CD4-positive, alpha-beta T cell (primary cell): ENCODE measurements at regions of chr17 and their contacts with region 1.

Region 1: DNA sequence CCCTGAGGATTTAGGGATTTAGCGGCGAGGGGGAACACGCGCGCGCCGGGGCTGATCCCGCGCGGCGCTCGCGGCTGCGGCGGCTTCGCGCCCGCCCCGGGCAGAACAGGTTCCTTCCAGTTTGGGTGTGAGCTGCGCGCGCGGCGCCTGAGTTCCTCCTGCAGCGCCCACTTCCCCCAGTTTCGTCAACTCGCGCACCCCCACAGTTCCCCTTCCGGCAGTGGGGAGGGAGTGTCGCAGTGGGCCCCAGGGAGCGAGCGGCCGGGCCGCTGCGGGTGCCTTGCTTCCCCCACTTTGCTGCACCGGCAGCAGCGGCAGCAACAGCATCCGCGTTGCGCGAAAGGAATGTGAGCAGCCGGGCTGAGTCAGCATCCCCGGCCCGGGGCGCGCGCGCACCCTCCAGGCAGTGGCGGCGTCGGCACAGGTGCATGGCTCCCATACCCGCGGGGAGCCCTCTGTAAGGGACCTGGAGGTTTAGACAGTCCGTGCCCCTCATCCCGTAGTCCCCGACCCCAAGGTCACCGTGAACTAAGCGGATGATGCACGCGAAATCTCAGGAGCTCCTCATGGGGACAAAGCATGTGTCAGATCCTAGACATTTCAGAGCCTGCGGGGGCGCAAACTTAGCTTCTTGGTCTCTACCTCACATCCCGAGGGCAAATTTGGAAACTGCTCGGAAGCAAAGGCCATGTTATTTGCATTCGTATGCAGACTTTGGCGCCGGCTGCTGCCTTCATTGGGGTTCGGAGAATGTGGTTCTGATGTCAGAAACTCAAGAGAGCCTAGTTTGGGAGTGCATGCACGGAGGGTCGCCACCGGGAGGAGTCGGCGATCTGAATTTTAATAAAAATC is 775 bp downstream of the ARSG start:
- DNase-seq: peak; percentile 85 to 98 (median 92)
- ATAC-seq: peak; percentile 69
- H3K4me3 ChIP-seq: peak overlapping the region; percentile 56
- H3K4me3 Mint-ChIP-seq: peak overlapping the region; percentile 89
- H3K27ac ChIP-seq: peak overlapping the region; percentile 5 to 82
- H3K27ac Mint-ChIP-seq: peak overlapping the region; percentile 98
- H3K4me1 ChIP-seq: peaks cover 71% of the 10 kb centered on the region
- H3K4me1 Mint-ChIP-seq: peaks cover 76% of the 10 kb centered on the region
- H3K27me3 ChIP-seq: no peaks in the 10 kb centered on the region
- H3K27me3 Mint-ChIP-seq: no peaks in the 10 kb centered on the region
- CTCF ChIP-seq: no peak

Region 2: DNA sequence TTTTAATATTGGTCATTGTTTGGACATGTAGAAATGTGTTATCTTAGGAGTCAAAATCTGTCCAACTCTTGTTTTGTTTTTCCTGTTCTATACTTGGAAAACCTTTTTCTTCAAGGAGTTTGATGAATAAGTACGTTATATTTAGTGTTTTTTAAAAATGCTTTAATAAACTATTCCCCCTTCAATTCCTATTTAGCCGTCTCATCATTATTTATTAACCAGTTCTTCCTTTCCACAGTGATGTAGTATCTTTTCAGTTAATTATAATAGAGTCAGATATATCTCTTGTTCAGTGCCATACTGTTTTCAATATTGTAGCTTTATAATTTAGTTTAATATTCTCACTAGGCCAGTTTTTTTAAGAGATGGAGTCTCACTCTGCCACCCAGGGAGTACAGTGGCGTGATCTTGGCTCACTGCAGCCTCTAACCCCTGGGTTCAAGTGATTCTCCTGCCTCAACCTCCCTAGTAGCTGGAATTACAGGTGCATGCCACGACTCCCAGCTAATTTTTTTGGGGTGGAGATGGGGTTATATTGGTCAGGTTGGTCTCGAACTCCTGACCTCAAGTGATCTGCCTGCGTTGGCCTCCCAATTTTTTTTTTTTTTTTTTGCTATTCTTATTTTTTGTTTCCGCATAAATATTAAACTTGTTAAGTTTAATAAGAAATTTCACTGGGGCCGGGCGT is 183.6 kb before region 1 on chr17:
- CTCF ChIA-PET with region 1: no interaction called
- POLR2A ChIA-PET with region 1: no interaction called
- intact Hi-C with region 1: no loop called
- DNase-seq: no peak
- ATAC-seq: no peak
- H3K4me3 ChIP-seq: no peak overlapping the region
- H3K4me3 Mint-ChIP-seq: no peak overlapping the region
- H3K27ac ChIP-seq: no peak overlapping the region
- H3K27ac Mint-ChIP-seq: no peak overlapping the region
- H3K4me1 ChIP-seq: peaks cover 3% of the 10 kb centered on the region
- H3K4me1 Mint-ChIP-seq: peaks cover 52% of the 10 kb centered on the region
- H3K27me3 ChIP-seq: no peaks in the 10 kb centered on the region
- H3K27me3 Mint-ChIP-seq: no peaks in the 10 kb centered on the region
- CTCF ChIP-seq: no peak

Region 3: DNA sequence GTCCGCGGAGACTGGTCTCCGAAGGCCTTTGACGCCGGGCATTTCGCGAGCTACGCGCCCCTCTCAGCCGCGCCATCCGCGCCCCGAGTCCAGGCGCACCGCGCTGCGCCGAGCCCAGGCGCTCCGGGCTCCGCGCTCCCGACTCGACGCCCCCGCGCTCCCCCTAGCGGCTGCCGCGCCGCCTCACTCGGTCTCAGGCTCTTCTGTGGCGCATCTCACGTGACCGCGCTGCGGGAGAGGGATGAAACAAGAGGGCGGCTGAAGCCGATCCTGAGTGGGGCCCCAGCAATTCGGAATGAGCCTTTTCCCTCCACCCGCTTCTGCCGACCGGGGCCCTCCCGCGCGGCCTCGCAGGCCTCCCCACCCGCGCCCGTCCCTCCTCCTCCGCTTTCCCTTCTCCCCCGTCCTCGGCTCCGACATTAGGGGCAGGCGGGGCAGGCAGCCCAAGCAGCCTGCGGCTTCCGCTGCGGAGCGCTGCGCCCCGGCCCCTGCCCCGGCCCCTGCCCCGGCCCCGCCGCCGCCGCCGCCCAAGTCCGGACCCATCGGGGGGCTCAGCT is 86.7 kb before region 1 on chr17:
- CTCF ChIA-PET with region 1: no interaction called
- POLR2A ChIA-PET with region 1: interaction called, 39 read pairs
- intact Hi-C with region 1: no loop called
- DNase-seq: peak; percentile 82 to 96 (median 92)
- ATAC-seq: peak; percentile 73
- H3K4me3 ChIP-seq: peak overlapping the region; percentile 70
- H3K4me3 Mint-ChIP-seq: peak overlapping the region; percentile 94
- H3K27ac ChIP-seq: peak overlapping the region; percentile 58 to 76
- H3K27ac Mint-ChIP-seq: peak overlapping the region; percentile 84
- H3K4me1 ChIP-seq: peaks cover 33% of the 10 kb centered on the region
- H3K4me1 Mint-ChIP-seq: peaks cover 36% of the 10 kb centered on the region
- H3K27me3 ChIP-seq: no peaks in the 10 kb centered on the region
- H3K27me3 Mint-ChIP-seq: peaks cover 5% of the 10 kb centered on the region
- CTCF ChIP-seq: peak; percentile 87

Region 4: GRCh38 chr17:68277807-68278206 is 14.3 kb before region 1 on chr17:
- CTCF ChIA-PET with region 1: no interaction called
- POLR2A ChIA-PET with region 1: interaction called, 30 read pairs
- intact Hi-C with region 1: no loop called
- DNase-seq: no peak
- ATAC-seq: no peak
- H3K4me3 ChIP-seq: no peak overlapping the region
- H3K4me3 Mint-ChIP-seq: no peak overlapping the region
- H3K27ac ChIP-seq: no peak overlapping the region
- H3K27ac Mint-ChIP-seq: no peak overlapping the region
- H3K4me1 ChIP-seq: no peaks in the 10 kb centered on the region
- H3K4me1 Mint-ChIP-seq: peaks cover 17% of the 10 kb centered on the region
- H3K27me3 ChIP-seq: no peaks in the 10 kb centered on the region
- H3K27me3 Mint-ChIP-seq: no peaks in the 10 kb centered on the region
- CTCF ChIP-seq: no peak

Region 5: GRCh38 chr17:68346448-68346847 is 54.4 kb after region 1 on chr17:
- CTCF ChIA-PET with region 1: interaction called, 3 read pairs
- POLR2A ChIA-PET with region 1: interaction called, 104 read pairs
- intact Hi-C with region 1: loop called (anchors 2 to 5 kb)
- DNase-seq: peak; percentile 32 to 86 (median 60)
- ATAC-seq: peak; percentile 66
- H3K4me3 ChIP-seq: peak overlapping the region; percentile 27
- H3K4me3 Mint-ChIP-seq: peak overlapping the region; percentile 75
- H3K27ac ChIP-seq: peak overlapping the region; percentile 69 to 75
- H3K27ac Mint-ChIP-seq: peak overlapping the region; percentile 91
- H3K4me1 ChIP-seq: peaks cover 81% of the 10 kb centered on the region
- H3K4me1 Mint-ChIP-seq: peaks cover 75% of the 10 kb centered on the region
- H3K27me3 ChIP-seq: no peaks in the 10 kb centered on the region
- H3K27me3 Mint-ChIP-seq: no peaks in the 10 kb centered on the region
- CTCF ChIP-seq: no peak

Region 6: GRCh38 chr17:68398691-68399637 is 106.9 kb after region 1 on chr17:
- CTCF ChIA-PET with region 1: no interaction called
- POLR2A ChIA-PET with region 1: interaction called, 25 read pairs
- intact Hi-C with region 1: no loop called
- DNase-seq: peak in 4 of 14 experiments; percentile 35 to 57 (median 48)
- ATAC-seq: no peak
- H3K4me3 ChIP-seq: no peak overlapping the region
- H3K4me3 Mint-ChIP-seq: no peak overlapping the region
- H3K27ac ChIP-seq: no peak overlapping the region
- H3K27ac Mint-ChIP-seq: no peak overlapping the region
- H3K4me1 ChIP-seq: peaks cover 37% of the 10 kb centered on the region
- H3K4me1 Mint-ChIP-seq: peaks cover 36% of the 10 kb centered on the region
- H3K27me3 ChIP-seq: no peaks in the 10 kb centered on the region
- H3K27me3 Mint-ChIP-seq: no peaks in the 10 kb centered on the region
- CTCF ChIP-seq: peak; percentile 40

Region 7: DNA sequence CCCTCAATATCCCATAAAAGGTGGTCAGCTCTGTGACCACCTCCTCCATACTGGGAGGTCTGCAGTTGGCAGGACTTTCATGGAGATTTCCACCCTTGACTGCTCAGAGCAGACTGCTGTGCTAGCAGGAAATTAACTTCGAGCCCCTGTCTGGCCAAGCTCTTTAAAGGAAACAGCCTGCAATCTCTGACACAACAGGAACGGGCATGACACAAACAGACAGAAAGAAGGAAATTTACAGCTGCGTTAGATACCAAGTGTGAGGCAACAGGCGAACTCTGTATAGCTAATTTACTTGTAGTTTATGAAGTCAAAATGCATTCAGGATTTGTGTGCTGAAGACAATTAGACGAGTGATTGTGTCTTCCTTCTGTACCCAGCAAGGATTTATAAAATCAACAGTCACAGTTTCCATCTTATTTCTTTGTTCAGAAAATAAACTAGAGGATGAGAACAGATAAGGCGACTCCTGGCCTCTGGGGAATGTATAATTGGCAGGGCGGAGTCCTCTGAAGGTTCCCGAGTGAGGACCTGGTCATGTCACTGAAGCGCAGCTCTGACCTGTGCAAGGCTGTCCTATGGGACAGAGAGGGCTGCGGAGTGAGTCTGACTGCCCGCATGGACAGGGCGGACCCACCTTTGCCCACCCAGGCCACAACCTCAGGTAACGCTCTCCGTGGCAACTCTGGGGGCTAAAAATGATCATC is 149.1 kb after region 1 on chr17:
- CTCF ChIA-PET with region 1: interaction called, 8 read pairs
- POLR2A ChIA-PET with region 1: interaction called, 33 read pairs
- intact Hi-C with region 1: loop called in 1 of 2 experiments (anchors 2 kb)
- DNase-seq: peak in 2 of 14 experiments; percentile 20 to 41
- ATAC-seq: no peak
- H3K4me3 ChIP-seq: no peak overlapping the region
- H3K4me3 Mint-ChIP-seq: no peak overlapping the region
- H3K27ac ChIP-seq: no peak overlapping the region
- H3K27ac Mint-ChIP-seq: peak overlapping the region; percentile 61
- H3K4me1 ChIP-seq: peaks cover 33% of the 10 kb centered on the region
- H3K4me1 Mint-ChIP-seq: peaks cover 53% of the 10 kb centered on the region
- H3K27me3 ChIP-seq: no peaks in the 10 kb centered on the region
- H3K27me3 Mint-ChIP-seq: no peaks in the 10 kb centered on the region
- CTCF ChIP-seq: no peak